A549 (cell line): ENCODE measurements at regions of chr9 and their contacts with region 1.

Region 1: DNA sequence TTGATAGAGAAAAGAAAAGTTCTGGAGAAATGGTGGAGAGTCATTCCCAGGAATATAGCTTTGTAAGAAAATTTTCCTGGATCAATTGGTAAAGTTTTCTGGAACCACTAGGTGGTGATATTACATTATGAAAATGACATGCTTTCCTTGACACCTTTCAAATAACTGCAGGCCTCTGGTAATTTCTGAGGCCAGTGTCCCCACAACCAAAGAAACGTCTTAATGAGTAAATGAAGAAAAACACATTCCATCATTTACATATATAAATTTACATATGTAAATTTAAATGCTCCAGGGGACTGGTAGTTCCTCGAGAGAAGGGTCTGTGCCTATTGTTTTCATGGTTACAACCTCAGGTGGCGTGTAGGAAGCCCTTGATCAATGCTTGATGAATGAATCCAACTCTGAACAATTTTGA is 17.2 kb upstream of the RGS3 start:
- DNase-seq: peak; percentile 52 to 77
- ATAC-seq: peak; percentile 50 to 79; a peak in 4 of 6 replicates
- H3K4me3 ChIP-seq: no peak overlapping the region
- H3K27ac ChIP-seq: no peak overlapping the region
- H3K4me1 ChIP-seq: no peaks in the 10 kb centered on the region
- CTCF ChIP-seq: peak; percentile 91
- EP300 ChIP-seq: no peak
- POLR2A ChIP-seq: no peak
- RAD21 ChIP-seq: peak; percentile 86 to 93

Region 2: GRCh38 chr9:113463418-113464285 is 17.3 kb after region 1 on chr9 and contains the start of gene RGS3:
- CTCF ChIA-PET with region 1: interaction called, 43 read pairs
- POLR2A ChIA-PET with region 1: no interaction called
- DNase-seq: peak; percentile 68 to 83
- ATAC-seq: peak; percentile 96 to 97
- H3K4me3 ChIP-seq: peak within 1 kb of the TSS; percentile 69
- H3K27ac ChIP-seq: peak within 1 kb of the TSS; percentile 77 to 89
- H3K4me1 ChIP-seq: peaks cover 25% of the 10 kb centered on the region
- CTCF ChIP-seq: no peak
- EP300 ChIP-seq: no peak
- POLR2A ChIP-seq: no peak
- RAD21 ChIP-seq: 0 out of 5 replicates have a peak, but pooled peaks of 1 of the 2 experiments have one; percentile 11
- polyA plus RNA-seq, gene RGS3: 19.6 and 21.5 TPM in 2 replicates

Region 3: GRCh38 chr9:113533335-113534225 is 87.2 kb after region 1 on chr9:
- CTCF ChIA-PET with region 1: interaction called, 11 read pairs
- POLR2A ChIA-PET with region 1: no interaction called
- DNase-seq: no peak
- ATAC-seq: no peak
- H3K4me3 ChIP-seq: no peak overlapping the region
- H3K27ac ChIP-seq: no peak overlapping the region
- H3K4me1 ChIP-seq: no peaks in the 10 kb centered on the region
- CTCF ChIP-seq: no peak
- EP300 ChIP-seq: no peak
- POLR2A ChIP-seq: no peak
- RAD21 ChIP-seq: no peak

Region 4: GRCh38 chr9:113602126-113603044 is 156.1 kb after region 1 on chr9:
- CTCF ChIA-PET with region 1: interaction called, 11 read pairs
- POLR2A ChIA-PET with region 1: no interaction called
- DNase-seq: no peak
- ATAC-seq: peak; percentile 43 to 46; a peak in 4 of 6 replicates
- H3K4me3 ChIP-seq: no peak overlapping the region
- H3K27ac ChIP-seq: peak overlapping the region in 1 of 2 experiments; percentile 35; a peak in 1 of 6 replicates
- H3K4me1 ChIP-seq: peaks cover 7% of the 10 kb centered on the region
- CTCF ChIP-seq: no peak
- EP300 ChIP-seq: no peak
- POLR2A ChIP-seq: no peak
- RAD21 ChIP-seq: no peak

Region 5: GRCh38 chr9:113669522-113670115 is 223.3 kb after region 1 on chr9:
- CTCF ChIA-PET with region 1: interaction called, 18 read pairs
- POLR2A ChIA-PET with region 1: no interaction called
- DNase-seq: no peak
- ATAC-seq: no peak
- H3K4me3 ChIP-seq: no peak overlapping the region
- H3K27ac ChIP-seq: no peak overlapping the region
- H3K4me1 ChIP-seq: no peaks in the 10 kb centered on the region
- CTCF ChIP-seq: no peak
- EP300 ChIP-seq: no peak
- POLR2A ChIP-seq: no peak
- RAD21 ChIP-seq: no peak